Activated CD4-positive, alpha-beta T cell treated with anti-CD3 and anti-CD28 coated beads, Interleukin-2, amount 10 ng/mL, durations not matched to agents 24 days and 14 days (primary cell): ENCODE measurements at regions of chr14 and their contacts with region 1.

Region 1: GRCh38 chr14:105944632-105945610 is 418.5 kb downstream of the TMEM121 start:
- DNase-seq: peak; percentile 93
- H3K4me3 Mint-ChIP-seq: no peak overlapping the region
- H3K27ac Mint-ChIP-seq: no peak overlapping the region
- H3K4me1 Mint-ChIP-seq: peaks cover 12% of the 10 kb centered on the region
- H3K27me3 Mint-ChIP-seq: no peaks in the 10 kb centered on the region

Region 2: DNA sequence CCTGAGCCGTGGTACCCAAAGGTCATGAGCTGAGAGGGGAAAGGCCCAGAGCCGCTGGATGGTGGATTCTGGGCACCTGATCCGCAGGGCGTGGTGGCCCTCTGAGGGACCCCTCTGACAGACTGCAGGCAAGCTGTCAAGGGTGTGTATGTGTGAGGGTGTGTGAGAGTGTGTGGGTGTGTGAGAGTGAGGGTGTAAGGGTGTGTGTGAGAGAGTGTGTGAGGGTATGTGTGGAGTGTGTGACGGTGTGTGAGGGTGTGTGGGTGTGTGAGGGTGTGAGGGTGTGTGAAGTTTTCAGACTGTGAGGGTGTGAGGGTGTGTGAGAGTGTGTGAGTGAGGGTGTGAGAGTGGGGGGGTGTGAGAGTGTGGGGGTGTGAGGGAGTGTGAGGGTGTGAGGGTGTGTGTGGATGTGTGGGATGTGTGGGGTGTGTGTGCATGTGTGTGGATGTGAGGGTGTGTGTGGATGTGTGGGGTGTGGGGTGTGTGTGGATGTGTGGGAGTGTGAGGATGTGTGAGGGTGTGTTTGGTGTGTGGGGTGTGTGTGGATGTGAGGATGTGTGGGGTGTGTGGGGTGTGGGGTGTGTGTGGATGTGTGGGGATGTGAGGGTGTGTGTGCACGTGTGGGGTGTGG is 261.9 kb before region 1 on chr14:
- intact Hi-C with region 1: loop called (anchors 10 kb)
- DNase-seq: no peak
- H3K4me3 Mint-ChIP-seq: no peak overlapping the region
- H3K27ac Mint-ChIP-seq: peak overlapping the region; percentile 71
- H3K4me1 Mint-ChIP-seq: peaks cover 4% of the 10 kb centered on the region
- H3K27me3 Mint-ChIP-seq: no peaks in the 10 kb centered on the region

Region 3: DNA sequence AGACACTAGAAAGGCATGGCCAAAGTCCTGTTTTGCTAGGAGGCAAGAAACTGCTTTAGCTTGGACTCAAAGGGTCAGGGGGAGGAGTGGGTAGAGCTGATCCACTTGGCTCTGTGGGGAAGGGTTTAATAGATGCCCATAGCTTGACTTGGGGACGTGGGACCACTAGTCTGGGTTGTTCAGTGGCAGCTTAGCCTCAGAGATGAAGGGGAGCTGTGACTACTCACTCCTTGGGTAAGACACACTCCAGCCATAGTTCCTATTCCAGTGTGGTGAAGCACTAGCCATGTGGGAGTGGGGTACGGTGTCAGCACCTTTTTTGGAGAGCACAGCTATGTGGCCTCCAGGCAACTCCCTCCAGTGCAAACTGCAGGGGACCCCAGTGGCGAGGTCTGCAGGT is 161.2 kb before region 1 on chr14:
- intact Hi-C with region 1: no loop called
- DNase-seq: no peak
- H3K4me3 Mint-ChIP-seq: no peak overlapping the region
- H3K27ac Mint-ChIP-seq: no peak overlapping the region
- H3K4me1 Mint-ChIP-seq: no peaks in the 10 kb centered on the region
- H3K27me3 Mint-ChIP-seq: peaks cover 18% of the 10 kb centered on the region

Region 4: GRCh38 chr14:105999361-106000028 is 54.6 kb after region 1 on chr14:
- intact Hi-C with region 1: loop called (anchors 2 kb)
- DNase-seq: peak; percentile 96
- H3K4me3 Mint-ChIP-seq: peak overlapping the region; percentile 21
- H3K27ac Mint-ChIP-seq: peak overlapping the region; percentile 70
- H3K4me1 Mint-ChIP-seq: peaks cover 42% of the 10 kb centered on the region
- H3K27me3 Mint-ChIP-seq: no peaks in the 10 kb centered on the region

Region 5: DNA sequence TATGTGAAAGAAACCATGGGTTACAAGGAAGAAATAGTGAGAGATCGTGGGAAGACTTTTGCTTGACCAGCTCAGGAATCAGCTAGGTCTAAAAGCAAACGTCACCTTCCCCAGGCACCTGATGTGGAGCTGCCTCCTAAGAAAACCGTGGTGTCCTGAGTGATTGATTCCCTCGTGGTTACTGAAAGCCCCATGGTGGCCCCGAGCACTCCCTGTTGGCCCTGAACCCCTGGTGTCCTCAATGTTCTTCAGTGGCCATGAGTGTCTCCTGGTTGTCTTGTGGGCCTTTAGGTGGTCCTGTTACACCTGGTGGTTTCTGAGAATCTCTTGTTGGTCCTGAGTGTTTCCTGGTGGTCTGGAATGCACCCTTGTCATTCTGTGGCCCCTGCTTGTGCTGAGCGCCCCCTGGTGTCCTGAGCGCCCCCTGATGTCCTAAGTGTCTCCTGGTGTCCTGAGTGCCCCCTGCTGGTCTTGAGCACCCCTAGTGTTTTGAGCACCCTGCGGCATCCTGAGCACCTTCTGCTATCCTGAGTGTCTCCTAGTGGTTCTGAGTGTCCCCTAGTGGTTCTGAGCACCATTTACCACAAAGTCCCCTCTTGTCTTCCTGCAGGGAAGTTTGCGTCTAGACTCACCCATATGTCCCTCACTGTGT is 100.2 kb after region 1 on chr14:
- intact Hi-C with region 1: loop called (anchors 5 kb)
- DNase-seq: peak; percentile 94
- H3K4me3 Mint-ChIP-seq: no peak overlapping the region
- H3K27ac Mint-ChIP-seq: no peak overlapping the region
- H3K4me1 Mint-ChIP-seq: peaks cover 9% of the 10 kb centered on the region
- H3K27me3 Mint-ChIP-seq: no peaks in the 10 kb centered on the region